Ascending aorta (tissue), 2 donors: ENCODE measurements at regions of chr12 and their contacts with region 1.

Region 1: GRCh38 chr12:132986001-132986912 is at the start of gene ZNF26:
- DNase-seq: peak; percentile 64 to 94
- H3K4me3 ChIP-seq: peak within 1 kb of the TSS; percentile 81 to 84
- H3K27ac ChIP-seq: peak within 1 kb of the TSS; percentile 84 to 93
- H3K4me1 ChIP-seq: peaks cover 3 to 6% of the 10 kb centered on the region in 2 donors
- H3K27me3 ChIP-seq: no peaks in the 10 kb centered on the region
- CTCF ChIP-seq: no peak
- total RNA-seq, gene ZNF26: 73.4 TPM

Region 2: DNA sequence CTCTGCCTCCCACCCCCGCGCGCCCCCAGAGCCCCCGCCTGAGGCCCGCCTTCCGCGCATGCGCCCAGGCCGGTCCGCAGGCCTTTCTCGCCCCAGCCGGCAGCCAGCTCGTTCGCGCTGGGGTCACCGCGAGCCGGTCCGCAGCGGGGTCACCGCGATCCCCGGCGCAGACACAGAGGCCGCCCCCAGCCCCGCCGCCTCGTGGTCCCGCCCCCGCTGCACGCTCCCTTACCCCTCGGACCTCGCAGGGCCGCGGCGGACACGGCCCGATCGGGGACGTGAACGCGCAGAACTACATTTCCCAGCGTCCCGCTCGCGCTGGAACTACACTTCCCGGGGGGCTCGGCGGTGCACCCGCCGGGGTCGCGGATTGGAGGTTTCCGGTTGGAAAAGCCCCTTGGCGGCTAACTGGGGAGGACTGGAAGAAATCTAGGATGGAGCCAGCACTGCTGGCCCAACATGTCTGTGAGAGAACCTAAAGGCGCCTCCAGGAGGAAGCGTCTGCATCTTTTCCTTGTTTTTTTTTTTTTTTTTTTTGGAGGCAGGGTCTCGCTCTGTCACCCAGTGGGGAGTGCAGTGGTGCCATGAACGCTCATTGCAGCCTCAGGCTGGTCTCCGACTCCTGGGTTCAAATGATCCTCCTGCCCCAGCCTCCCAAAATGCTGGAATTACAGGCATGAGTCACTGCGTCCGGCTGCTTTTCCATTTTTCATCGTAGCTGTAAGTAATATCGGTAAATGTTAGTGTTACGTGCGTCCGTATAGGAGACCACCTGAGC is 30.1 kb before region 1 on chr12 and contains the start of gene ZNF605:
- intact Hi-C with region 1: loop called (anchors 1 kb)
- DNase-seq: peak; percentile 41 to 91
- H3K4me3 ChIP-seq: peak within 1 kb of the TSS; percentile 80 to 98
- H3K27ac ChIP-seq: peak within 1 kb of the TSS; percentile 89 to 92
- H3K4me1 ChIP-seq: peaks cover 0 to 2% of the 10 kb centered on the region in 2 donors
- H3K27me3 ChIP-seq: no peaks in the 10 kb centered on the region
- CTCF ChIP-seq: no peak
- total RNA-seq, gene ZNF605: 1.3 TPM

Region 3: GRCh38 chr12:133037207-133038005 is 51.1 kb after region 1 on chr12 and contains the start of gene ZNF84:
- intact Hi-C with region 1: loop called (anchors 1 kb)
- DNase-seq: peak; percentile 87 to 97
- H3K4me3 ChIP-seq: peak within 1 kb of the TSS; percentile 83 to 99
- H3K27ac ChIP-seq: peak within 1 kb of the TSS; percentile 95 to 98
- H3K4me1 ChIP-seq: peaks cover 0 to 3% of the 10 kb centered on the region in 2 donors
- H3K27me3 ChIP-seq: no peaks in the 10 kb centered on the region
- CTCF ChIP-seq: no peak
- total RNA-seq, gene ZNF84: 2.7 TPM

Region 4: DNA sequence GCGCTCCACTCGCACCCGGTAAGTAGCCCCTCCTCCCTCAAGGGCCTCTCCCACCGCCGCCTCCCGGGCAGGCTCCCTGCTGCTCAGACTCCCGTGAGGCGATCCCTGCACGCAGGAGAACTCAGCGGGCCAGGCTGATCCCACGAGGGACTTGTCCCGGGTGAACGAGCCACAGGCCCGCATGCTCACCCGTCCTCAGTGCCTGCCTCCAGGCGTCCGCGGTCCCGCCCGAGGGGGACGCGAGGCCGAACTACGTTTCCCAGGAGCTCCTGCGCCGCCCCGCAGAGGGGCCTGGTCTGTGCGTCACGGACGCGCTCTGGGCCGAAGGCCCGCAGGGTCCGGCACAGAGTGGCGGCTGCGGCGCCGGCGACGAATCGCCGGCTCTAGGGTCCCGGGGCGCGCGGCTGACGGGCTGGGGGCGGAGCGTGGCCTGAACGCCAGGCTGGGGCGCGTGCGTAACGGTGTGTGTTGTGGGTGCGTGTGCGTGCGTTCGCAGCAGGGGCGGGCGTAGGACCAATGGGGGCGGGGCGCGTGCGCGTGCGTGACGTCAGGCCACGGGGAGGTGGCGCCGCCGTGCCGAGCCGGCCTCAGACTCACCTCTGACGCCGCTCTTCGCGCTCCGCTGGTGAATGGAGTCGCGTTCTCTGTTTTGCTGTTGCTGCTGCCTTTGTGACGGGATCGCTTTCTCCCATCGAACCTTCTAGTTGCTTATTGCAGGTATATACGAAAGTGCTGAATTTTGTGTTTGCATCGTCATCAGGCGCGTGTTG is 144.0 kb after region 1 on chr12 and contains the starts of genes ZNF10 and ZNF891:
- intact Hi-C with region 1: loop called (anchors 1 kb)
- DNase-seq: peak; percentile 78 to 97
- H3K4me3 ChIP-seq: peak within 1 kb of the TSS; percentile 90 to 94
- H3K27ac ChIP-seq: peak within 1 kb of the TSS; percentile 89 to 93
- H3K4me1 ChIP-seq: peaks cover 0 to 7% of the 10 kb centered on the region in 2 donors
- H3K27me3 ChIP-seq: no peaks in the 10 kb centered on the region
- CTCF ChIP-seq: peak in 1 of 3 experiments; percentile 3
- total RNA-seq, gene ZNF10: 3.8 TPM
- total RNA-seq, gene ZNF891: 2.0 TPM

Region 5: GRCh38 chr12:133181238-133181959 is 195.1 kb after region 1 on chr12 and contains the start of gene ZNF268:
- intact Hi-C with region 1: loop called (anchors 1 kb)
- DNase-seq: peak; percentile 19 to 93
- H3K4me3 ChIP-seq: peak within 1 kb of the TSS; percentile 86
- H3K27ac ChIP-seq: peak within 1 kb of the TSS; percentile 46 to 72
- H3K4me1 ChIP-seq: no peaks in the 10 kb centered on the region
- H3K27me3 ChIP-seq: no peaks in the 10 kb centered on the region
- CTCF ChIP-seq: peak; percentile 49 to 76 (median 61)
- total RNA-seq, gene ZNF268: 38.5 TPM